ENCODE measurements at regions of chrX and their contacts with region 1.

Region 1: GRCh38 chrX:19225924-19226323 is 103.7 kb upstream of the ADGRG2 start:
- DNase-seq: no peak
- ATAC-seq: peak; percentile 91
- H3K4me3 ChIP-seq: no peak overlapping the region
- H3K27ac ChIP-seq: no peak overlapping the region
- H3K4me1 ChIP-seq: no peaks in the 10 kb centered on the region
- H3K27me3 ChIP-seq: no peaks in the 10 kb centered on the region
- CTCF ChIP-seq: peak; percentile 29 to 59 (median 41); a peak in 4 of 6 replicates
- EP300 ChIP-seq: no peak
- POLR2A ChIP-seq: no peak
- RAD21 ChIP-seq: peak; percentile 75

Region 2: DNA sequence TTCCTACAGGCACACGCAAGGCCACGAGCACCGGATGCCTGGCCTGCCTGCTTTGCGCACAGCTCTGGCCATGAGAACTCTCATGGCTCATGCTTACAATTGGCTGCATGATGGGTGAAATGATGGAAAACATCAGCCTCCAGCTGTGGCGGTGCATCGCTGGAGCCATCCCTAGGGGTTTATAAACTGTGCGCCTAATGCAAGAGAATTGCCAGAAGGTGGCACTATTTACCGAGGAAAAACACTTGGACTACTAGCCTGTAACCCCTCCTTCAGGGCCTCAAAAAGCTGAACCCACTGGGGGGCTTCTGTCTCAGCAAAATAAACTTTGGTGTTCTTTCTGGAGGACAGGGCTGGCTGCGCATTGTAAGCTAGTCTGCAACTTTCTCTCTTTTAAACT is 294.0 kb before region 1 on chrX:
- CTCF ChIA-PET with region 1: no interaction called
- POLR2A ChIA-PET with region 1: no interaction called
- RAD21 ChIA-PET with region 1: no interaction called
- SMC1A ChIA-PET with region 1: interaction called, 3 read pairs
- in situ Hi-C with region 1: no loop called
- intact Hi-C with region 1: loop called (anchors 10 kb)
- DNase-seq: no peak
- ATAC-seq: peak; percentile 59
- H3K4me3 ChIP-seq: no peak overlapping the region
- H3K27ac ChIP-seq: no peak overlapping the region
- H3K4me1 ChIP-seq: no peaks in the 10 kb centered on the region
- H3K27me3 ChIP-seq: no peaks in the 10 kb centered on the region
- CTCF ChIP-seq: peak; percentile 20 to 40 (median 40); a peak in 5 of 6 replicates
- EP300 ChIP-seq: no peak
- POLR2A ChIP-seq: no peak
- RAD21 ChIP-seq: peak; percentile 47

Region 3: GRCh38 chrX:19040373-19040772 is 185.6 kb before region 1 on chrX:
- CTCF ChIA-PET with region 1: interaction called, 15 read pairs
- POLR2A ChIA-PET with region 1: no interaction called
- RAD21 ChIA-PET with region 1: interaction called, 13 read pairs
- SMC1A ChIA-PET with region 1: interaction called, 9 read pairs
- in situ Hi-C with region 1: no loop called
- intact Hi-C with region 1: loop called (anchors 5 kb)
- DNase-seq: no peak
- ATAC-seq: no peak
- H3K4me3 ChIP-seq: no peak overlapping the region
- H3K27ac ChIP-seq: no peak overlapping the region
- H3K4me1 ChIP-seq: no peaks in the 10 kb centered on the region
- H3K27me3 ChIP-seq: no peaks in the 10 kb centered on the region
- CTCF ChIP-seq: peak in 2 of 3 experiments; percentile 14 to 39; a peak in 2 of 6 replicates
- EP300 ChIP-seq: no peak
- POLR2A ChIP-seq: no peak
- RAD21 ChIP-seq: peak; percentile 34; the same call in 1 of the 2 replicates

Region 4: DNA sequence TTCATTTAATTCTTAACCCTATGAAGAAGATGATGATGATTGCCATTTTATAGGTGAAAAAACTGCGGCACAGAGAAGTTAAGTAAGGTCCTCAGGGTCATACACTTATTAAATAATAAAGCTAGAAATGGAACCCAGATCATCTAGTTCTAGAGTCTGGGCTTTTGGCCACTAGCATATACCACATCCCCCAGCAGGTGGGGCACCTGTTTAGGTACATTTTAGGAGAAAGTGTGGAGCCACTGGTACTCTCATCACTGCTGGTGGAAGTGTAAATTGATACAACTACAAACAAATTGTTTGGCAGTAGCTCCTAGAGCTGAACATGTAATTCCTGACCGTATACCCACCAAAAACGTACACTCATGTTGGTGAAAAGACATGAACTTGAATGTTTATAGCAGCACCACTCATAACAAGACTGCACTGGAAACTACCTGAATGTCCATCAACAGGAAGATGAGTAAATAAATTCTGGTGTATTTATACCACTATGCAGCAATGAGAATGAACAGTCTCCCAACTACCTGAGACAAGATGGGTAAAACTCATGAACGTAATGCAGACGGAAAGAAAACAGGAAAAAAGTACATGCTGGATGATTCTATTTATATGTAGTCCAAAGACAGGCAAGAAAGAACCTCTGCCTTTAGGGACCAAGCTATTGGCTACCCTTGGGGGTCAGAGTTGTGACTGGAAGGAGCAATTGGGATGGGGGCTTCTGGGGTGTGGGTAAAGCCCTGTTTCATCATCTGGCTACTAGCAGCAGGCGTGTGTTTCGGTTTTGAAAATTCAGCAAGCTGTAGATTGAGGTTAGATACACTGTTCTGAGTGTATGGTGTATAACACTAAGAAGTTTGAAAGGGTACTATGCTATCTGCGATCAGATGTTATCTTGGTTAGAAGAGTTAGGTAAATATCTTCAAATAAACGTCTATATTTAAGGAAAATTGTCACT is 31.4 kb before region 1 on chrX:
- CTCF ChIA-PET with region 1: no interaction called
- POLR2A ChIA-PET with region 1: no interaction called
- RAD21 ChIA-PET with region 1: interaction called, 3 read pairs
- SMC1A ChIA-PET with region 1: interaction called, 5 read pairs
- in situ Hi-C with region 1: no loop called
- intact Hi-C with region 1: loop called (anchors 1 kb)
- DNase-seq: peak; percentile 47
- ATAC-seq: peak; percentile 75
- H3K4me3 ChIP-seq: no peak overlapping the region
- H3K27ac ChIP-seq: peak overlapping the region; percentile 68
- H3K4me1 ChIP-seq: peaks cover 7% of the 10 kb centered on the region; the same call in 1 of the 2 replicates
- H3K27me3 ChIP-seq: no peaks in the 10 kb centered on the region
- CTCF ChIP-seq: peak; percentile 8 to 19 (median 14); a peak in 2 of 6 replicates
- EP300 ChIP-seq: peak; percentile 45 to 49; a peak in 2 of 4 replicates
- POLR2A ChIP-seq: no peak
- RAD21 ChIP-seq: peak; percentile 43; the same call in 1 of the 2 replicates

Region 5: DNA sequence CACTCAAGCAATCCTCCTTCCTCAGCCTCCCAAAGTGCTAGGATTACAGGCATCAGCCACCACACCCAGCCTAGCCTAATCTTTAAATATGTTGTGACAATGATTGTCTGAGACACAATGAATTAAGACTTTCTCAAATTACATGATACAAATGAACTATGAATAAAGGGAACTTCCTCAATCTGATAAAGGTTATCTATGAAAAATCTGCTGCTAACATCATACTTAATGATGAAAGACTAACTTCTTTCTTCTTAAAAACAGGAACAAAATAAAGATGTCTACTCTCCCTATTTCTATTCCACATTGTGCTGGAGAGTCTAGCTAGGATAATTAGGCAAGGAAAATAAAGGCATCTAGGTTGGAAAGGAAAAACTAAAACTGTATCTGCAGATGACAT is 177.8 kb after region 1 on chrX:
- CTCF ChIA-PET with region 1: no interaction called
- POLR2A ChIA-PET with region 1: no interaction called
- RAD21 ChIA-PET with region 1: no interaction called
- SMC1A ChIA-PET with region 1: no interaction called
- in situ Hi-C with region 1: no loop called
- intact Hi-C with region 1: no loop called
- DNase-seq: no peak
- ATAC-seq: no peak
- H3K4me3 ChIP-seq: no peak overlapping the region
- H3K27ac ChIP-seq: no peak overlapping the region
- H3K4me1 ChIP-seq: no peaks in the 10 kb centered on the region
- H3K27me3 ChIP-seq: no peaks in the 10 kb centered on the region
- CTCF ChIP-seq: no peak
- EP300 ChIP-seq: no peak
- POLR2A ChIP-seq: no peak
- RAD21 ChIP-seq: no peak